ENCODE measurements at regions of chr9 and their contacts with region 1.

Region 1: DNA sequence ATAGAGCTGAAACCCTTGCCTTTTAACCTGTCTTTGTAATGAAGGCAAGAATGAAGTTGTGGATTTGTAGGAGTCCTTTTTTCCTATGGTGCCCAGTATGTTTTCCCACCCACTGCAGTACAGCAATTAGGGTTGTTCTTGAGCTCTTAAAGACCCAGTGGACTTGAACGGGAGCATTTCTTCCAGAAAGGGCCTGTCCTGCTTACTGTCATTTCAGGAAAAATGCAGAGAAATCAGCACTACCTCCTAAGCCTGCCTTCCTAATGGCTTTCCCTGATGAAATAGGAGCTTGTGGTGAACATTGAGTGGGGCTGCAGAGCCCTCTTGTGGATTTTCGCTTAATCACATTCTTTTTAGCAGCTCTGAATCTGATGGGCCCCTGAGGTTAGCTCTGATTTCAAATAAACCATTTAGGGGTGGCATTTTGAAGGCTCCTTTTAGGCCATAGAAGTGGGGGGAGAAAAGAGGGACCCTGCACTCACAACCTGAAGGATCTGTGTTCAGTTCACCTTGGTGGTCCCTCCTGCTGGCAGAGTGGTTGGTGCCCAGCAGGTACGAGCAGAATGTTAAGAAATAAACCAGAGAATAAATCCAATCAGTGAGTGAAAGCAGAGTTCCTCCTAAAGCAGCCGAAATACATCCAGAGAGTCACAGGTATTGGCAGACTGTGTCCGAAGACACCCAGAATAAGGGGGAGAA is 188.0 kb upstream of the KLF9 start:
- DNase-seq: peak; percentile 59
- ATAC-seq: peak; percentile 76
- H3K4me3 Mint-ChIP-seq: no peak overlapping the region
- H3K27ac Mint-ChIP-seq: no peak overlapping the region
- H3K4me1 Mint-ChIP-seq: peaks cover 4% of the 10 kb centered on the region
- H3K27me3 Mint-ChIP-seq: no peaks in the 10 kb centered on the region

Region 2: GRCh38 chr9:69971643-69972449 is 630.6 kb before region 1 on chr9:
- CTCF ChIA-PET with region 1: interaction called, 15 read pairs
- POLR2A ChIA-PET with region 1: no interaction called
- DNase-seq: peak; percentile 66
- ATAC-seq: peak; percentile 51
- H3K4me3 Mint-ChIP-seq: no peak overlapping the region
- H3K27ac Mint-ChIP-seq: no peak overlapping the region
- H3K4me1 Mint-ChIP-seq: no peaks in the 10 kb centered on the region
- H3K27me3 Mint-ChIP-seq: peaks cover 2% of the 10 kb centered on the region

Region 3: DNA sequence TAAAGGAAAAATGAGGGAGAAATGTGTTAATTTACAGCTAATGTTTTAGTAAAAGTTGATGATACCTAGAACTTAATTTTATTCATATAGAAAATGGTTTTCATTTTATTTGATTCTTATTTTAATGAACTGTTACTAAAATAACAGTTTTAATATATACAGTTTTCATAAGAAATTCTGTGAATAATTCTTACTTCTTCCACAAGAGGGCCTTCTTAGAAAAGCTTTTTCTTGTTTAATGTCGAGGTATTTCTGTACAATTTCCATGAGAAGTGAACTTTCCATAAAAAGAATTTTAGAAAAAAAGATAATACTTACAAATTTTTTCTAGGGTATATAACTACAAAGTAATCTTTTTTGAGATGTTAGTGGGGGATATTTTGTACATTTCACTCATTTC is 261.9 kb before region 1 on chr9:
- CTCF ChIA-PET with region 1: interaction called, 50 read pairs
- POLR2A ChIA-PET with region 1: no interaction called
- DNase-seq: no peak
- ATAC-seq: no peak
- H3K4me3 Mint-ChIP-seq: no peak overlapping the region
- H3K27ac Mint-ChIP-seq: no peak overlapping the region
- H3K4me1 Mint-ChIP-seq: no peaks in the 10 kb centered on the region
- H3K27me3 Mint-ChIP-seq: no peaks in the 10 kb centered on the region

Region 4: GRCh38 chr9:70392189-70392588 is 210.3 kb before region 1 on chr9:
- CTCF ChIA-PET with region 1: interaction called, 27 read pairs
- POLR2A ChIA-PET with region 1: no interaction called
- DNase-seq: no peak
- ATAC-seq: no peak
- H3K4me3 Mint-ChIP-seq: no peak overlapping the region
- H3K27ac Mint-ChIP-seq: no peak overlapping the region
- H3K4me1 Mint-ChIP-seq: peaks cover 49% of the 10 kb centered on the region
- H3K27me3 Mint-ChIP-seq: no peaks in the 10 kb centered on the region

Region 5: GRCh38 chr9:70406434-70406862 is 196.0 kb before region 1 on chr9:
- CTCF ChIA-PET with region 1: interaction called, 27 read pairs
- POLR2A ChIA-PET with region 1: no interaction called
- DNase-seq: peak; percentile 60
- ATAC-seq: peak; percentile 31
- H3K4me3 Mint-ChIP-seq: peak overlapping the region; percentile 80
- H3K27ac Mint-ChIP-seq: peak overlapping the region; percentile 94
- H3K4me1 Mint-ChIP-seq: peaks cover 68% of the 10 kb centered on the region
- H3K27me3 Mint-ChIP-seq: no peaks in the 10 kb centered on the region

Region 6: GRCh38 chr9:70502690-70503089 is 99.8 kb before region 1 on chr9:
- CTCF ChIA-PET with region 1: interaction called, 11 read pairs
- POLR2A ChIA-PET with region 1: no interaction called
- DNase-seq: no peak
- ATAC-seq: no peak
- H3K4me3 Mint-ChIP-seq: no peak overlapping the region
- H3K27ac Mint-ChIP-seq: no peak overlapping the region
- H3K4me1 Mint-ChIP-seq: peaks cover 4% of the 10 kb centered on the region
- H3K27me3 Mint-ChIP-seq: no peaks in the 10 kb centered on the region

Region 7: DNA sequence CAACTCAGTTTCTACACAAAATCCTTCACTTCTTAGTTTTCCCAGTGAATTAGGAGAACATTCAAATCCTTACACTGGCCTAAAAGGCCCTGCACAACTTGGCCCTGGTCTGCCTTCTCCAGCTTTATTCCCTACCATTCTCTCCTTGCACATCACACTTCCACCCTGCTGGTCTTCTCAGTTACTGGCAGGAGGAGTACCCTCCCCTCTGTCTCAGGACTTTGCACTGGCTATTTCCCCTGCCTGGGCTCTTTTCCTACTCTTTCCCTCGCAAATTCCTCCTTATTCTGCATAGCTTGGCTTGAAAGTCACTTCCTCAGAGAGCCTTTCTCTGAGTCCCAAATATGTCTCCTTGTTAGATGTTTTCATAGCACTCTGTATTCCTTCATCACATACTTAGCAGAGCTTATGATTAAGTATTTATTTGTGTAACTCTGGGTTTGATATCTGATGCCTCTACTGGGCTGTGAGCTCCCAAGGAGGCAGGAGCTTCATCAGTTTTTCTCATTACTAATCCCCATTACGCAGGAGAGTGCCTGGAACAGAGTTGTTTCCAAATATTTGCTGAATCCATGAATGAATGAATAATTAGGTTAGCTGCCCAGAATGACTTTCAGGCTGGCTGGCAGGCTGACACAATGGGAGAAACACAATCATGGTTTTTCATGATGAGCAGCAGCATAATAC is 28.2 kb before region 1 on chr9:
- CTCF ChIA-PET with region 1: interaction called, 15 read pairs
- POLR2A ChIA-PET with region 1: no interaction called
- DNase-seq: no peak
- ATAC-seq: no peak
- H3K4me3 Mint-ChIP-seq: no peak overlapping the region
- H3K27ac Mint-ChIP-seq: no peak overlapping the region
- H3K4me1 Mint-ChIP-seq: no peaks in the 10 kb centered on the region
- H3K27me3 Mint-ChIP-seq: no peaks in the 10 kb centered on the region

Measured in activated CD8-positive, alpha-beta T cell treated with anti-CD3 and anti-CD28 coated beads, Interleukin-2, amount 10 ng/mL, durations not matched to agents 7 days and 5 days (primary cell).